Activated CD4-positive, alpha-beta T cell treated with anti-CD3 and anti-CD28 coated beads for 36 hours (primary cell): ENCODE measurements at regions of chr4 and their contacts with region 1.

Region 1: GRCh38 chr4:95889662-95890061 is 49.8 kb downstream of the PDHA2 start:
- DNase-seq: no peak
- ATAC-seq: no peak
- H3K4me3 Mint-ChIP-seq: no peak overlapping the region
- H3K27ac Mint-ChIP-seq: no peak overlapping the region
- H3K4me1 Mint-ChIP-seq: no peaks in the 10 kb centered on the region
- H3K27me3 Mint-ChIP-seq: no peaks in the 10 kb centered on the region

Region 2: GRCh38 chr4:95910749-95911148 is 21.1 kb after region 1 on chr4:
- CTCF ChIA-PET with region 1: no interaction called
- POLR2A ChIA-PET with region 1: no interaction called
- intact Hi-C with region 1: loop called in 1 of 2 experiments (anchors 1 kb)
- DNase-seq: no peak
- ATAC-seq: no peak
- H3K4me3 Mint-ChIP-seq: no peak overlapping the region
- H3K27ac Mint-ChIP-seq: no peak overlapping the region
- H3K4me1 Mint-ChIP-seq: no peaks in the 10 kb centered on the region
- H3K27me3 Mint-ChIP-seq: peaks cover 2% of the 10 kb centered on the region